A673 (cell line): ENCODE measurements at regions of chr1 and their contacts with region 1.

Region 1: GRCh38 chr1:34750610-34751009 is 4.2 kb upstream of the GJB5 start:
- DNase-seq: no peak
- H3K4me3 ChIP-seq: no peak overlapping the region
- H3K27ac ChIP-seq: no peak overlapping the region
- H3K4me1 ChIP-seq: no peaks in the 10 kb centered on the region
- H3K27me3 ChIP-seq: no peaks in the 10 kb centered on the region
- CTCF ChIP-seq: no peak

Region 2: GRCh38 chr1:35524106-35524505 is 773.5 kb after region 1 on chr1:
- CTCF ChIA-PET with region 1: no interaction called
- POLR2A ChIA-PET with region 1: interaction called, 11 read pairs
- intact Hi-C with region 1: no loop called
- DNase-seq: no peak
- H3K4me3 ChIP-seq: no peak overlapping the region
- H3K27ac ChIP-seq: no peak overlapping the region
- H3K4me1 ChIP-seq: no peaks in the 10 kb centered on the region
- H3K27me3 ChIP-seq: no peaks in the 10 kb centered on the region
- CTCF ChIP-seq: no peak